ENCODE measurements at regions of chr11 and their contacts with region 1.

Region 1: DNA sequence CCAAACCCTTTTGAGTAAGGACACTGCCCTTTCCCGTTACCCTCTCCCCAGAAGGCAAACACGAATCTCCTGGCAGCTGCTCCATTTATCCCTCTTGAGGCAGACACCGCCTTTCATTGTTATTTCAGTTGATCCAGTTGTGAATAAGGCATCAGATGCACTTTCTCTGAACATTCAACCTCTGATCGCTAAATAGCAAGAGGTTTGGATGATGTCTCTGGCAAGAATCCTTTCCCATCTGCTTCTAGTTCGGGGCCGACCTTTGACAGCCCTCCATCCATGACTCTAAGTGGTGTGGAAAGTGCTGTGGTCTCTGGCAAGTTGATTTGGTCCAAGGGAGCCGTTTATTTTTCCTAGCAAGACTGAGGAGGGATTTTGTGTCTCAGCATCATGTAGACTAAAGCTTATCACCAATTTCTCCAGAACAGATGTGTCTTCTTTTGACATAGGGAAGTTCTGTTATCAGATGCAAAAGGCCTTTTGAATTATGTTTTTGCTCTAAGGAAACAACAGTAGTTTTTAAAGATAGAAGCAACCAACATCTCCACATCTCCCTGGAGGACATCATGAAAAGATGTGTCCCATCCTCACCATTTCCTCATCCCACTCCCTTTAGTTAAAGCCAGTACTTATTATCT is 123.6 kb downstream of the CCDC34 start:
- DNase-seq: peak; percentile 82

Region 2: GRCh38 chr11:27228232-27228905 is 11.1 kb before region 1 on chr11:
- intact Hi-C with region 1: no loop called
- DNase-seq: no peak

Region 3: GRCh38 chr11:27263046-27263445 is 23.6 kb after region 1 on chr11:
- intact Hi-C with region 1: no loop called
- DNase-seq: no peak

Region 4: DNA sequence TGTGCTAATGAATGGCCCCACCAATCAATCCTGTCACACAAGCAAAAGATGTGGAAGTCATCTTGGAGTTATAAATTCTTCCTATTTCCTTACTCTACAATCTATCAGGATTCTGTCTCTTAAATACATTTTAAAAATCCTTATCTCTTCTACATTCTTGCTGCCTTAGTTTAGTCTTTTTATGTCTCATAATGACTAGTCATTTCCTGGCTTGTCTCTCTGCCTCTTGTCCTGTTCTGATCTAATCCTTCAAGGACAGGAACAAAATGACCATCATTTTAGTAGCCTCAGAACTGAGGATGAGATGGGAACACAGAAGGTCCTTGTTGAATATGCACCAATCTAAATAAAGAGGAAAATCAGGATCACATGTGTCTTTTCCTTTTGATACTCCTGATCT is 323.8 kb after region 1 on chr11:
- intact Hi-C with region 1: no loop called
- DNase-seq: no peak

Region 5: DNA sequence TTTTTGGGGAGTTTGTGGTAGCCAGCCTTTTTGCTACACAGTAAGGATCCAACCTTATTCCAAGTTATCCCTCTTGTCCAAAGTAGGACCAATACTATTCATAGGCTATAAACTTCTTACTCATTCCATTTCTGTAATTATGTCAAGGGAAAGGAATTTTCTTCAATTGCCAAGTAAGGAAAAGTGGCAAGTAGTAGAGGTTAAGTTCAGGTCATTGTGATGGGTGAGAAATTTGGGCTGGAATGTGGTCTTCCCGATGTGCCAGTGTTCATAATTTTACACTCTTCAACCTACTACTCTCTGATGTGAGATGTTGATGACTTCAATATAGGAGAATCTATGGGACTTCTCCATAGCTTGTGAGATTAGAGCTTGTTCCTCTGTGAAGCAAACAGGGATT is 1517.6 kb after region 1 on chr11:
- intact Hi-C with region 1: loop called in 1 of 2 experiments (anchors 5 kb)
- DNase-seq: no peak

Measured in posterior vena cava (tissue), 2 donors.